Naive thymus-derived CD4-positive, alpha-beta T cell (primary cell): ENCODE measurements at regions of chr14 and their contacts with region 1.

Region 1: GRCh38 chr14:54396493-54397335 is at the start of gene CDKN3:
- DNase-seq: peak; percentile 91 to 96 (median 95)
- ATAC-seq: peak; percentile 98
- H3K4me3 ChIP-seq: peak within 1 kb of the TSS; percentile 85
- H3K4me3 Mint-ChIP-seq: peak within 1 kb of the TSS; percentile 81 to 96 (median 90)
- H3K27ac ChIP-seq: peak within 1 kb of the TSS; percentile 46
- H3K27ac Mint-ChIP-seq: peak within 1 kb of the TSS; percentile 24 to 93 (median 83)
- H3K4me1 ChIP-seq: peaks cover 0 to 9% of the 10 kb centered on the region in 2 donors
- H3K4me1 Mint-ChIP-seq: peaks cover 0 to 38% (median 12%) of the 10 kb centered on the region in 7 donors
- H3K27me3 ChIP-seq: no peaks in the 10 kb centered on the region
- H3K27me3 Mint-ChIP-seq: peaks cover 0 to 2% (median 0%) of the 10 kb centered on the region in 5 donors
- total RNA-seq, gene CDKN3: 0.93 to 48.1 (median 3.0) TPM

Region 2: DNA sequence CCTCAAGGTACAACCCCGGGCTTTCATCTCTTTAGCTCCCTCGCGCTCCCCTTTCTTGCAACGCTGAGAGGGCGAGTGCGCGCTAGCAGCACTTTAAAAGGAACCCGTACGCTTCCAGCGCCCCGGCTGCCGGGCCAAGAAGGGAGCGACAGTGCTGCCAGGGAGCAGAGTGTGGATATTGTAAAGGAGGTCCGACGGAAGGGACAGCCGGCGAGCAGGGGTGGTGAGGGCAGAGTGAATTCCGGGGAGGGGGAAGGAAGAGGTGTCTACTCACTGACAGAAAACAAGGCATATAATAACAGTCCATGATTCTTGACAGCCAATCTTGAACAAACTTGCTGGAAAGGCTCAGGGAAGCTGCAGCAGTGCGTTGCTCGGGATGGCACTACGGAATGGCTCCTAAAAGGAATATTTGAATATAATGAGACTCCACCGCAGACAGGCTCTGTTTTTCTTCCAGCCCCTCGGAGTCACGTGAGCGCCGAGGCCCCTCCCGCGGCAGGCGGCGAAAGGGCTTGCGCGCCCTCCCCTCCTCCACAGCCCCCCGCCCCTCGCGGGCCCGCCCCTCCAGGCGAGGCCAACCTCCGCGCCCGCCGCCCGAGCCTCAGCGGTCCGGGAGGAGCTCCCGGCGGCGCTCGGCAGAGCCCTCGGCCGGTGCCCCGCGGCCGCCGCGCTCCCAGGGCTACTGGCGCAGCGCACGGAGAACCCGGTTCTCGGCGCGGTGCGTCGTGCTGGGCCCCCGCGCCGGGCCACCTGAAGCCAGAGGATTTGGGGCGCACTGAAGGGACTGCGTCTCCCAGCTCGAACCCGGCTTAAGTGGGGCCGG is 443.5 kb before region 1 on chr14:
- CTCF ChIA-PET with region 1: no interaction called
- POLR2A ChIA-PET with region 1: no interaction called
- intact Hi-C with region 1: loop called in 1 of 2 experiments (anchors 5 kb)
- DNase-seq: peak in 2 of 9 donors; percentile 2 to 24
- ATAC-seq: no peak
- H3K4me3 ChIP-seq: no peak overlapping the region
- H3K4me3 Mint-ChIP-seq: peak overlapping the region; percentile 60 to 92 (median 83)
- H3K27ac ChIP-seq: no peak overlapping the region
- H3K27ac Mint-ChIP-seq: peak overlapping the region in 2 of 9 donors; percentile 20 to 35
- H3K4me1 ChIP-seq: peaks cover 0 to 14% of the 10 kb centered on the region in 2 donors
- H3K4me1 Mint-ChIP-seq: peaks cover 6 to 41% (median 32%) of the 10 kb centered on the region in 7 donors
- H3K27me3 ChIP-seq: peaks cover 0 to 7% of the 10 kb centered on the region in 2 donors
- H3K27me3 Mint-ChIP-seq: peaks cover 54 to 86% (median 71%) of the 10 kb centered on the region in 5 donors

Region 3: DNA sequence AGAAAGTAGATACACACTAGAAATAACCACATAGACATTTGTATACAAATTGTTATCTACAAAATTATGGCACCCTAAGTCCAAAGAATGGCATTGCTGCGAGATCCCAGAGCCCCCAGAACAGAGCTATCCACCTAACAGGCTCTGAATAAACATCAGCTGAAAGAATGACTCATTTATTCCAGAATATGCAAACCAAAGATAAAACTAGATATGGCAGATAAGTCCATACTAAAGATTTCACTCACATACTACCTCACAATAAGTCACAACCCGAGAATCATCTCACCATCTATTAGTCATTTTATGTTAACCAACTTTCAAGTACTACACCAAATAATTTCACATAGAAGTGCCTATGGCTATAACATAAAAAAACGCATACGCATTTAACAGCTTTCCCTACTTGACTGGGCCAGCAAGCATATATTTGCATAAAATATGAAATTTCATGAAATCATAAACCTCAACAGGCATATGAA is 38.8 kb after region 1 on chr14:
- CTCF ChIA-PET with region 1: no interaction called
- POLR2A ChIA-PET with region 1: interaction called, 4 read pairs
- intact Hi-C with region 1: loop called in 1 of 2 experiments (anchors 1 kb)
- DNase-seq: no peak
- ATAC-seq: peak; percentile 38
- H3K4me3 ChIP-seq: no peak overlapping the region
- H3K4me3 Mint-ChIP-seq: peak overlapping the region in 4 of 10 donors; percentile 4 to 57 (median 28)
- H3K27ac ChIP-seq: no peak overlapping the region
- H3K27ac Mint-ChIP-seq: peak overlapping the region in 4 of 9 donors; percentile 1 to 60 (median 34)
- H3K4me1 ChIP-seq: peaks cover 15 to 16% of the 10 kb centered on the region in 2 donors
- H3K4me1 Mint-ChIP-seq: peaks cover 37 to 79% (median 78%) of the 10 kb centered on the region in 7 donors
- H3K27me3 ChIP-seq: no peaks in the 10 kb centered on the region
- H3K27me3 Mint-ChIP-seq: no peaks in the 10 kb centered on the region

Region 4: DNA sequence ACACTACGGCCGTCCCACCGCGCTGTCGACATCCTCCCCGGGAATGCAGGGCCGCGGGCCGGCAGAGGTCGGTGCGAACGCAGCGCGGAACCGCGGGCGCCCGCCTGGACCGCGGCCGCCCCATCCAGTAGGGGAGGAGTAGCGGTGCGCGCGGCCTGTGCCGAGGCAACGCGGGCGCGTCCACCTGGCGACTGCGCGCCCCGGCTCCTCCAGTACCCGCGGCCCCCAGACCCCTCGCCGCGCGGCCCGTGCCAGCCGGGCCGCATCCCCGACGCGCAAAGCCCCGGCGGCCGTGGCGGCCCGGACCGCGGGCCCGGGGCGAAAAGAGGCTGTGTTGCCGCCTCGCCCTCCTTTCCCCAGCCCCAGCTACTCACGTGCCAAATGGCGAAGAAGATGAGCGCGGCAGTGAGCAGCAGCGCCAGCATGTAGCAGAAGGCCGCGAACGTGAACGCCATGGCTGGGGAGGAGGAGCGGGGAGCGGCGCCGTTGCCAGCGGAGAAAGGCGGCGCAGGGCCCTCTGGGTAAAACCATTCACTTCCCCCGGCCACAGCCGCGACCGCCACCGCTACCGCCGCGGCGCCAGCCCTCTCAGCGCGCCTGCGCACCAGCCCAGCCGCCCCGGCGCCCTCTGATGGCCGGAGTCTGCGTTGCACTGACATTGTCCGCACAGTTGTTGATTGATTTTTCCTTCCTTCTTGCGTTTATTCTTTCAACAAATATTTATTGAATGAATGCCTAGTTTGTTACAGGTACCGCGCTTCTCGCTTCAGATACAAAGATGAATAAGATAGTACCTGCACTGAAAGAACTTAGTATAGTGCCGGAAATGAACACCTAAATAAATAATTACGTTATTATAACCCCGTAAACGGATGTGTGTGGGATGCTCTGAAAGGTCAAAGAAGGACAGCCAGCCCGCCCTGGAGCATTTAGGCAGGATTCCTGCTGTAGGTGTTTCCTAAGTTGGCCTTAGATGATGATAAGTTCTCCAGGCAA is 44.5 kb after region 1 on chr14 and contains the start of gene CNIH1:
- CTCF ChIA-PET with region 1: interaction called, 3 read pairs
- POLR2A ChIA-PET with region 1: interaction called, 7 read pairs
- intact Hi-C with region 1: loop called (anchors 1 kb)
- DNase-seq: peak; percentile 85 to 99 (median 93)
- ATAC-seq: peak; percentile 97
- H3K4me3 ChIP-seq: peak within 1 kb of the TSS; percentile 73
- H3K4me3 Mint-ChIP-seq: peak within 1 kb of the TSS; percentile 85 to 97 (median 94)
- H3K27ac ChIP-seq: peak within 1 kb of the TSS; percentile 80
- H3K27ac Mint-ChIP-seq: peak within 1 kb of the TSS; percentile 87 to 98 (median 95)
- H3K4me1 ChIP-seq: peaks cover 9 to 23% of the 10 kb centered on the region in 2 donors
- H3K4me1 Mint-ChIP-seq: peaks cover 23 to 54% (median 49%) of the 10 kb centered on the region in 7 donors
- H3K27me3 ChIP-seq: no peaks in the 10 kb centered on the region
- H3K27me3 Mint-ChIP-seq: peaks cover 0 to 2% (median 0%) of the 10 kb centered on the region in 5 donors
- total RNA-seq, gene CNIH1: 50.5 to 87.9 (median 57.8) TPM

Region 5: GRCh38 chr14:54488646-54489317 is 92.1 kb after region 1 on chr14 and contains the start of gene GMFB:
- CTCF ChIA-PET with region 1: no interaction called
- POLR2A ChIA-PET with region 1: no interaction called
- intact Hi-C with region 1: loop called (anchors 1 kb)
- DNase-seq: peak; percentile 72 to 88 (median 84)
- ATAC-seq: peak; percentile 97
- H3K4me3 ChIP-seq: peak within 1 kb of the TSS; percentile 65
- H3K4me3 Mint-ChIP-seq: peak within 1 kb of the TSS; percentile 80 to 96 (median 92)
- H3K27ac ChIP-seq: peak within 1 kb of the TSS; percentile 86
- H3K27ac Mint-ChIP-seq: peak within 1 kb of the TSS; percentile 77 to 99 (median 97)
- H3K4me1 ChIP-seq: peaks cover 17 to 18% of the 10 kb centered on the region in 2 donors
- H3K4me1 Mint-ChIP-seq: peaks cover 42 to 69% (median 63%) of the 10 kb centered on the region in 7 donors
- H3K27me3 ChIP-seq: no peaks in the 10 kb centered on the region
- H3K27me3 Mint-ChIP-seq: peaks cover 0 to 3% (median 0%) of the 10 kb centered on the region in 5 donors
- total RNA-seq, gene GMFB: 28.9 to 39.9 (median 34.7) TPM

Region 6: GRCh38 chr14:54509546-54510501 is 113.1 kb after region 1 on chr14 and contains the start of gene CGRRF1:
- CTCF ChIA-PET with region 1: no interaction called
- POLR2A ChIA-PET with region 1: no interaction called
- intact Hi-C with region 1: loop called (anchors 1 to 2 kb)
- DNase-seq: peak; percentile 86 to 98 (median 89)
- ATAC-seq: peak; percentile 99
- H3K4me3 ChIP-seq: peak within 1 kb of the TSS; percentile 93
- H3K4me3 Mint-ChIP-seq: peak within 1 kb of the TSS; percentile 87 to 99 (median 96)
- H3K27ac ChIP-seq: peak within 1 kb of the TSS; percentile 72
- H3K27ac Mint-ChIP-seq: peak within 1 kb of the TSS; percentile 85 to 93 (median 89)
- H3K4me1 ChIP-seq: peaks cover 11% of the 10 kb centered on the region in 2 donors
- H3K4me1 Mint-ChIP-seq: peaks cover 20 to 56% (median 53%) of the 10 kb centered on the region in 7 donors
- H3K27me3 ChIP-seq: no peaks in the 10 kb centered on the region
- H3K27me3 Mint-ChIP-seq: peaks cover 0 to 10% (median 0%) of the 10 kb centered on the region in 5 donors
- total RNA-seq, gene CGRRF1: 11.2 to 24.1 (median 17.3) TPM

Region 7: DNA sequence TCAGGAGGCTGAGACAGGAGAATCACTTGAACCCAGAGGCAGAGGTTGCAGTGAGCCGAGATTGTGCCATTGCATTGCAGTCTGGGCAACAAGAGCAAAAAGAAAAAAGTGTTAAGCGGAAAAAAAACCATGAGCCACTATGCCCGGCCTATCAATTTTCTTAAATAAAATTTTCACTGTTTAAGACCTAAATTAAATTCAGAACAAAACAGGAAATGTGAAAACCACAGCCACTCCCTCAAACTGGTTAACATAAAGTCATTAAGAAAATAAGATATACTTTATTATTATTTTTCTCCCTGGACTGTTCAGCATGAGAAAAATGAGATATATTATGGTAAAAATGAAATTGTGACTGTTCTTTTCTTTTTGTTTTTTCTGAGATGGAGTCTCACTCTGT is 550.5 kb after region 1 on chr14:
- CTCF ChIA-PET with region 1: no interaction called
- POLR2A ChIA-PET with region 1: no interaction called
- intact Hi-C with region 1: no loop called
- DNase-seq: peak in 2 of 9 donors; percentile 2 to 9
- ATAC-seq: no peak
- H3K4me3 ChIP-seq: no peak overlapping the region
- H3K4me3 Mint-ChIP-seq: peak overlapping the region in 1 of 10 donors; percentile 39
- H3K27ac ChIP-seq: no peak overlapping the region
- H3K27ac Mint-ChIP-seq: peak overlapping the region in 1 of 9 donors; percentile 42
- H3K4me1 ChIP-seq: peaks cover 0 to 9% of the 10 kb centered on the region in 2 donors
- H3K4me1 Mint-ChIP-seq: peaks cover 0 to 12% (median 8%) of the 10 kb centered on the region in 7 donors
- H3K27me3 ChIP-seq: no peaks in the 10 kb centered on the region
- H3K27me3 Mint-ChIP-seq: no peaks in the 10 kb centered on the region

Region 8: GRCh38 chr14:55191203-55192053 is 794.7 kb after region 1 on chr14 and contains the start of gene DLGAP5:
- CTCF ChIA-PET with region 1: no interaction called
- POLR2A ChIA-PET with region 1: no interaction called
- intact Hi-C with region 1: loop called in 1 of 2 experiments (anchors 2 kb)
- DNase-seq: peak; percentile 59 to 90 (median 86)
- ATAC-seq: peak; percentile 98
- H3K4me3 ChIP-seq: peak within 1 kb of the TSS; percentile 84
- H3K4me3 Mint-ChIP-seq: peak within 1 kb of the TSS; percentile 88 to 97 (median 90)
- H3K27ac ChIP-seq: peak within 1 kb of the TSS; percentile 58
- H3K27ac Mint-ChIP-seq: peak within 1 kb of the TSS; percentile 46 to 92 (median 68)
- H3K4me1 ChIP-seq: peaks cover 7 to 10% of the 10 kb centered on the region in 2 donors
- H3K4me1 Mint-ChIP-seq: peaks cover 5 to 42% (median 18%) of the 10 kb centered on the region in 7 donors
- H3K27me3 ChIP-seq: no peaks in the 10 kb centered on the region
- H3K27me3 Mint-ChIP-seq: peaks cover 0 to 4% (median 0%) of the 10 kb centered on the region in 5 donors
- total RNA-seq, gene DLGAP5: 0.49 to 46.7 TPM in 2 of 5 experiments, not detected in the others